Naive thymus-derived CD8-positive, alpha-beta T cell (primary cell): ENCODE measurements at regions of chr16 and their contacts with region 1.

Region 1: DNA sequence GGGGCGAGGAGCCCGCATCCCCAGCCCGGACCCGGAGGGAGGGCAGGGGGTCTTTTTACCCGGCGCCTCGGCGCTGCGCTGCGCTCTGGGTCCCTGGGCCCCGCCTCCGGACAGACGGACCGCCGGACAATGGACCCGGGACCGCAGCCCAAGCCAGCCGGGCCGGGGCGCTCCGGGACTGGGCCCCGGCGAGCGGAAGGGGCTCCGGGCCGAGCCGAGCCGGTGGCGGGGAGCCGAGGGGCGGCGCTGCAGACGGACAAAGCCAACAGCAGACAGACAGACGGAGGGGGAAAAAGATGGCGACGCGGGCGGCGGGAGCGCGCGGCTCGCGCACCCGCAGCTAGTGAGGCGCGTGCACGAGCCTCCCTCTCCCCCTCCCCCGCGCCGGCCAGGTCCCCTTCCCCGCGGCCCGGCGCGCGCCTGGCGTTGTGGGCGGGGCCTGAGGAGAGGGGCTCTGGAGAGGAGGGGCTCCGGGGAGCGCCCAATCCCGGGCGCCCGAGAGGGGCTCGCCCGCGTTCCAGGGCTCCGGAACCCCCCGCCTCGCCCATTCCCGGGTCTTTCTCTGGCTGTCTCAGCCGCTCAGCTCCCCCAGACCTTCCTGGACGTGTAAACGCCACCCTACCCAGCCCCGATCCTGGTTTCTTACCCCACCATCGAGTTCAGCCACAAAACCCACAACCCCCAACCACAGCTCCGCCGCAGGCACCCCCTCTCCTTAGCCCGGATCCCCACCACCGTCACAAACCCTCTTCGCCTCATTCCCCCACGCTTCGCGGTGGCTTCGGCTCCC is at the start of gene ZNF821:
- DNase-seq: peak; percentile 62 to 91 (median 78)
- ATAC-seq: peak; percentile 46 to 61
- H3K4me3 Mint-ChIP-seq: peak within 1 kb of the TSS; percentile 92 to 99 (median 94)
- H3K27ac Mint-ChIP-seq: peak within 1 kb of the TSS; percentile 87 to 98 (median 92)
- H3K4me1 Mint-ChIP-seq: peaks cover 35 to 54% (median 53%) of the 10 kb centered on the region in 4 donors
- H3K27me3 Mint-ChIP-seq: peaks cover 0 to 2% (median 0%) of the 10 kb centered on the region in 5 donors
- polyA plus RNA-seq, gene ZNF821: 4.3 to 5.4 (median 4.9) TPM

Region 2: GRCh38 chr16:71845639-71846430 is 38.2 kb before region 1 on chr16 and contains the start of gene ATXN1L:
- POLR2A ChIA-PET with region 1: interaction called, 35 read pairs
- DNase-seq: peak; percentile 88 to 97 (median 95)
- ATAC-seq: peak; percentile 95 to 97
- H3K4me3 Mint-ChIP-seq: peak within 1 kb of the TSS; percentile 90 to 96 (median 92)
- H3K27ac Mint-ChIP-seq: peak within 1 kb of the TSS; percentile 92 to 99 (median 98)
- H3K4me1 Mint-ChIP-seq: peaks cover 15 to 47% (median 41%) of the 10 kb centered on the region in 4 donors
- H3K27me3 Mint-ChIP-seq: no peaks in the 10 kb centered on the region
- polyA plus RNA-seq, gene ATXN1L: 4.8 to 8.5 (median 7.5) TPM

Region 3: DNA sequence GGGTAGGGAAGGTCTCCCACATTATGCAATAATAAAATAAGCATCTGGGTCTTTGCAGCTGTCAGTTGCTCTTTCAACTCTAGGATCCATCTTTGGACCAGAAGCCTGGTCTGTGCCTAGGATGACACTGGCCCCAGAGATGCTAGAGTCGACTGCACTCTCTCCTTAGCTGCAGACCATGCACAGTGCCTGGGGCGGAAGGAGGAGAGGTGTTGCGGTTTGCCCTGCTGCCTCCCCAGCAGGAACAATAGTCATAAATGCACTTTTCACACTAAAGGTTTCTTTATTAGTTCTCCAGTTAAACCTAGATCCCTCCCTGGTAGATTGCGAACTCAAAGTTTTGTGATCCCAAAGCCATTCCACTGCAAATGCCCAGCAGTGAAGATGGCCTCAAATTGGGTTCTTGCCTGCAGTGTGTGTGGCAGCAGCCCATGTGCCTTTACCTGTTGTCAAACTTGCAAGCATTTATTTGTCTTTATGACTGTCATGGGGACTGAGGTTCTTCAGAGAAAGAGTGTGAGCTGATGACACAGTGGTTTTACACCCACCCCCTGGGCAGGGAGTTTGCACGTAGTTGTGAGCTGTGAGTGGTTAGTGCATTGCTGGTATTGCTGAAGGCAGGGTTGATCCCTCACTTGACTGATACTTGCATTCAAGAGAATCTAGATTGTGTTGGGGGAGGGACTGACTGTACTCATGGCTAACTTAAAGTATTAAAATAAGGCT is 27.9 kb before region 1 on chr16:
- POLR2A ChIA-PET with region 1: interaction called, 11 read pairs
- DNase-seq: peak in 1 of 10 donors; percentile 45
- ATAC-seq: peak; percentile 32 to 35
- H3K4me3 Mint-ChIP-seq: peak overlapping the region in 2 of 10 donors; percentile 6 to 80
- H3K27ac Mint-ChIP-seq: peak overlapping the region in 8 of 10 donors; percentile 29 to 93 (median 70)
- H3K4me1 Mint-ChIP-seq: peaks cover 28 to 69% (median 57%) of the 10 kb centered on the region in 4 donors
- H3K27me3 Mint-ChIP-seq: no peaks in the 10 kb centered on the region

Region 4: DNA sequence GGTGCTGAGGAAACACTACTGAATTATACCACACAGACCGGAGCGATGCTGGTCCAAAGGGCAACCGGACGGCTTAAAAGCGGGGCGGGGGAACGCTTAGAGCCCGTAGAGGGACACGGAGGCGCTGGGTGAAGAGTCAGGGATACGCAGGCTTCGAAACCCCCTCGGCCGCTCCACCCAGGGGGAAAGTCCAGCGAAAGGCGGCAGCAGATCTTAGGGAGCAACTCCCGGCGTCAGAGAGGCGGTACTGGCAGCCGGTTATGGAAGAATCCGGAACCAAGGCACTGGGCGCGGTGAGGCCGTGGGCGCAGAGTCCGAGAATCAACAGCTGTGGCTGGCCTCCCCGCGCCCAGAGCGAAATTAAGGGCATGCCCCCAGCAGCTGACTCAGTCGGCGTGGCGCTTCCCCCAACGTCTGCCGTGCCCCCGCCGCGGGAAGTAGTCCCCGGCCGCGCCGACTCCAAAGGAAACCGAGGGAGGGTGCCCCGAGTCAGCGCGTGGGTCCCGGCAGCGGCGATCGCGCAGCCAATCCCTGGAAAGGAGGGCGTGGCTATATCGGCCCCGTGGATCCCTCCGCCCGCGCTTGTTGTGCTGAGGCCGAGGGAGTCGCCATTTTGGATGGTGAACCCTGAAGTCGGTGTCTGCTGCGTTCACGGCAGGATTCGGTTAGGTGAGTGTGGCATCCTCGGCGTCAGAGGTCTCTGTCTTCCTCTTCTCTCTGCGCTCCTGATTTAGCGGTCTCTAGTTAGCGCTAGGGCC is 11.1 kb after region 1 on chr16 and contains the start of gene IST1:
- POLR2A ChIA-PET with region 1: interaction called, 121 read pairs
- DNase-seq: peak; percentile 93 to 99 (median 98)
- ATAC-seq: peak; percentile 88 to 89
- H3K4me3 Mint-ChIP-seq: peak within 1 kb of the TSS; percentile 95 to 98 (median 96)
- H3K27ac Mint-ChIP-seq: peak within 1 kb of the TSS; percentile 94 to 98 (median 97)
- H3K4me1 Mint-ChIP-seq: peaks cover 11 to 45% (median 29%) of the 10 kb centered on the region in 4 donors
- H3K27me3 Mint-ChIP-seq: no peaks in the 10 kb centered on the region
- polyA plus RNA-seq, gene IST1: 115 to 161 (median 115) TPM

Region 5: GRCh38 chr16:71937868-71938510 is 53.9 kb after region 1 on chr16:
- POLR2A ChIA-PET with region 1: no interaction called
- DNase-seq: no peak
- ATAC-seq: no peak
- H3K4me3 Mint-ChIP-seq: no peak overlapping the region
- H3K27ac Mint-ChIP-seq: peak overlapping the region in 3 of 10 donors; percentile 70 to 74 (median 74)
- H3K4me1 Mint-ChIP-seq: peaks cover 0 to 14% (median 7%) of the 10 kb centered on the region in 4 donors
- H3K27me3 Mint-ChIP-seq: no peaks in the 10 kb centered on the region

Region 6: GRCh38 chr16:71954699-71955195 is 70.7 kb after region 1 on chr16:
- POLR2A ChIA-PET with region 1: no interaction called
- DNase-seq: no peak
- ATAC-seq: no peak
- H3K4me3 Mint-ChIP-seq: no peak overlapping the region
- H3K27ac Mint-ChIP-seq: peak overlapping the region in 3 of 10 donors; percentile 19 to 41 (median 37)
- H3K4me1 Mint-ChIP-seq: peaks cover 0 to 7% (median 6%) of the 10 kb centered on the region in 4 donors
- H3K27me3 Mint-ChIP-seq: peaks cover 2 to 7% (median 4%) of the 10 kb centered on the region in 5 donors

Region 7: GRCh38 chr16:72036098-72036497 is 152.1 kb after region 1 on chr16:
- POLR2A ChIA-PET with region 1: no interaction called
- DNase-seq: no peak
- ATAC-seq: no peak
- H3K4me3 Mint-ChIP-seq: no peak overlapping the region
- H3K27ac Mint-ChIP-seq: no peak overlapping the region
- H3K4me1 Mint-ChIP-seq: no peaks in the 10 kb centered on the region
- H3K27me3 Mint-ChIP-seq: no peaks in the 10 kb centered on the region

Region 8: GRCh38 chr16:72110662-72111615 is 226.9 kb after region 1 on chr16:
- POLR2A ChIA-PET with region 1: no interaction called
- DNase-seq: no peak
- ATAC-seq: no peak
- H3K4me3 Mint-ChIP-seq: no peak overlapping the region
- H3K27ac Mint-ChIP-seq: no peak overlapping the region
- H3K4me1 Mint-ChIP-seq: no peaks in the 10 kb centered on the region
- H3K27me3 Mint-ChIP-seq: peaks cover 0 to 1% (median 0%) of the 10 kb centered on the region in 5 donors